ENCODE measurements at regions of chr1 and their contacts with region 1.

Region 1: GRCh38 chr1:34779526-34779925 is 1.5 kb upstream of the GJB3 start:
- DNase-seq: peak; percentile 86
- H3K27ac ChIP-seq: peak overlapping the region; percentile 99
- CTCF ChIP-seq: no peak

Region 2: DNA sequence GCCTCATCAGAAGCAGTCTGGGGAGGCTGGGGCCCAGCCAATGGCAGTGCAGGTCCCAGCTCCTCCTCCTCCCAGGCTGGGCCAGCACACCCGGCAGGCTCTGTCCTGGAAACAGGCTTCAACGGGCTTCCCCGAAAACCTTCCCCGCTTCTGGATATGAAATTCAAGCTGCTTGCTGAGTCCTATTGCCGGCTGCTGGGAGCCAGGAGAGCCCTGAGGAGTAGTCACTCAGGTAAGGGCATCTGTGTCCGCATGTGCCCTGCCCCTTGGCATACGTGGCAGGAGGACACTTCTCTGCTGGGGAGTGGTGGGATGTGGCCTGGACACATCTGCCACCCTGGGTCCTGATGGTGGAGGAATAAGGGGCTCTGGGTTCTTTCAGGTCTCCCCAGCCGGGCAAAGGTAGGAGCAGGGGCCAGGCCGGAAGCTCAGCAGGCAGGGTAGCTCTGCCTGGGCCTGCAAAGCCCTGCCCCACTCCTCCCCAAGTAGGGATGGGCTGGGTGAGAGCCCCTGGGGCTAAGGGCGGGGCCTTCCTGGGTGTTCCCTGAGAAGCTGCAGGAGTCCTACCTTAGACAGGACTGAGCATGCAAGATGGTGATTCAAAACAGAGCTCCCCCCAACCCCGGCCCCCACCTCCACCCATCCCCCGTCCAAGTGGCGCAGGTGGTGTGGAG is 24.4 kb before region 1 on chr1 and contains the start of gene GJB5:
- CTCF ChIA-PET with region 1: no interaction called
- POLR2A ChIA-PET with region 1: interaction called, 19 read pairs
- DNase-seq: peak; percentile 96
- H3K27ac ChIP-seq: peak within 1 kb of the TSS; percentile 99
- CTCF ChIP-seq: no peak

Region 3: DNA sequence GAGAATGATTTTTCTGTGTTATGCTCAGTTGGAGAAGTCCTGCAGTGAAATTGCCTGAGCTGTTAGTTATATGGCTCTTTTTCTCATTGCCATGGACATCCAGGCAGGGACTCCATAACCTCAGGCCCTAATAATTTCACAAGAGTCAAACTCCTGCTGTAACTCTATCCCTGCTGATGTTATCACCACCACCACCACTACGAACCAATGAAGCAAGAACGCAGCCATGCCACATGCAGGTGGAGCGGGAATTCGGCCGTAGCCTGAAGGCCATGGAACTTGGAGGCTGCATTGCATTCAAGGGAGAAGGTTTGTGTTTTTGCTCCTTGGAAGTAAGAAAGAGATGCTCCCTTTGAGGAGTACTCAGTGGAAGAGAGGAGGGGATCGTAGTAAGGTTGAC is 166.7 kb after region 1 on chr1:
- CTCF ChIA-PET with region 1: no interaction called
- POLR2A ChIA-PET with region 1: no interaction called
- DNase-seq: no peak
- H3K27ac ChIP-seq: no peak overlapping the region
- CTCF ChIP-seq: no peak